Activated CD8-positive, alpha-beta memory T cell treated with anti-CD3 and anti-CD28 coated beads, Interleukin-2, amount 10 ng/mL, durations not matched to agents 7 days and 5 days (primary cell): ENCODE measurements at regions of chr1 and their contacts with region 1.

Region 1: GRCh38 chr1:147892731-147893214 is 9.8 kb upstream of the GJA8 start:
- DNase-seq: peak; percentile 45
- ATAC-seq: no peak
- H3K4me3 Mint-ChIP-seq: no peak overlapping the region
- H3K27ac Mint-ChIP-seq: no peak overlapping the region
- H3K4me1 Mint-ChIP-seq: no peaks in the 10 kb centered on the region
- H3K27me3 Mint-ChIP-seq: peaks cover 10% of the 10 kb centered on the region

Region 2: DNA sequence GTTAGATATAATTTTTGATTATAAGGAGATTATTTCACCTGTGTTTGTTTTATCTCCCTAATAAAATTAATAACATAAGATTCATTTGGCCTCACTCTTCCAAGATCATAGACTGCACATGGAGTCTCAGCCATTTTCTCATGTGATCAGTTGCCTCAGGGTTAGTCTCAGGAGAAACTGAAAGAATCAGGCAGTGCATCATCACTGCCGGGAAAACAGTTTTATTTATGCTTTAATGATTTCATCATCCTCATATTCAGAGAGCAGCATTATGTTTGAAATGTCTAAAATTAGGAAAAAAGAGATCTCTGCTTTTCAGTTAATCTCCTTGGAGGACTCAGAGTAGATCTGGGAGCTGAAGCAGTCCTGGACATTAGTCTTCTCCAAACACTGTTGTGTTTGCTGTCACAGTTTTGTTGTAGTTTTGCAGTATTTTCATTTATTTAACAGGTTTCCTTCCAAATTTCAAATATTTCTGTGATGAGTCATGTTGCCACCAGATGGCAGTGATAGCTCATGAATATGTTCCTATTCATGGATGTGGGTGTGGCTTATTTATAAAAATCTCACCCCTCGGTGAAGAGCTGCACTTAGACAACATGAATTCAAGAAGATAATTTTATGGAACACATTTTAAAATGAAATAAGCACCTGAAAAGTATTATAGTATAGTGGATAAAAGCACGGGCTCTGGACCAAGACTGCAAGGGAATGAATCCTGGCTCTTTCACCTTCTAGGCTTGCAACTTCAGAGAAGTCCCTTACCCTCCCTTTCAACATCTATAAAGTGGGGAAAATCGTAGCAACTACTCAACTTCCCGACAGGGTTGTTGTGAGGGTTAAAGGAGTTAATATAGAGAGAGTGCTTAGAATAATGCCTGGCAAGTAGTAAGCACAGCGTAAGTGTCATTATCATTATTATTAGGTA is 619.1 kb before region 1 on chr1:
- CTCF ChIA-PET with region 1: interaction called, 10 read pairs
- DNase-seq: no peak
- ATAC-seq: no peak
- H3K4me3 Mint-ChIP-seq: no peak overlapping the region
- H3K27ac Mint-ChIP-seq: no peak overlapping the region
- H3K4me1 Mint-ChIP-seq: no peaks in the 10 kb centered on the region
- H3K27me3 Mint-ChIP-seq: no peaks in the 10 kb centered on the region

Region 3: DNA sequence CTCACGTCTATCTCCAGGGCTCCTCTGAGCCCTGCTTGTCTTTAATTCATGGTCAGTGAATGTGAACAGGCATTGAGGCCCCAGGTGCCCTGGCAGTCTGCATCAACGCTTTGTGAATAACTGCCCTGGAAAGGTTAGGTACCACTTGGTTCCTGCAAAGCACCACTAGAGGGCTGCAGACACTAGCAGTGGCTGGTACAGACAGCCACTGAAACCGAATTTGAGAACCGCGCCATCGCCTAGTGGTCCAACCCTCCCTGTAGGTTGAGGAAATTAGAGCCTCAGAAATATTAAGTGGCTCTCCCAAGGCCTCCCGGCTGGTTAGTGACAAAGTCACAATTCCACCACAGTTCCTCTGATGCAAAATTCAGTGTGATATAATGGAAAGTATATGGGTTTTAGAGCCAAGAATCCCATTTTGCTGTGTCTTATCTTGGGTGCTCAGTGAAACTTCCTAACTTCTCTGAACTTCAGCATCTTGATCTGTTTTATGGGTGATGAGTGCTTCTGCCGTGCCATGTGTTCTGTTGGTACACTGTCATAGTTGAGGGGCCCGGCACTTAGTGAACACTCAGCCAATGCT is 397.7 kb before region 1 on chr1:
- CTCF ChIA-PET with region 1: interaction called, 24 read pairs
- DNase-seq: peak; percentile 81
- ATAC-seq: peak; percentile 100
- H3K4me3 Mint-ChIP-seq: no peak overlapping the region
- H3K27ac Mint-ChIP-seq: no peak overlapping the region
- H3K4me1 Mint-ChIP-seq: no peaks in the 10 kb centered on the region
- H3K27me3 Mint-ChIP-seq: peaks cover 10% of the 10 kb centered on the region

Region 4: GRCh38 chr1:147627435-147628110 is 265.2 kb before region 1 on chr1:
- CTCF ChIA-PET with region 1: interaction called, 12 read pairs
- DNase-seq: peak; percentile 55
- ATAC-seq: peak; percentile 72
- H3K4me3 Mint-ChIP-seq: no peak overlapping the region
- H3K27ac Mint-ChIP-seq: no peak overlapping the region
- H3K4me1 Mint-ChIP-seq: peaks cover 19% of the 10 kb centered on the region
- H3K27me3 Mint-ChIP-seq: no peaks in the 10 kb centered on the region

Region 5: DNA sequence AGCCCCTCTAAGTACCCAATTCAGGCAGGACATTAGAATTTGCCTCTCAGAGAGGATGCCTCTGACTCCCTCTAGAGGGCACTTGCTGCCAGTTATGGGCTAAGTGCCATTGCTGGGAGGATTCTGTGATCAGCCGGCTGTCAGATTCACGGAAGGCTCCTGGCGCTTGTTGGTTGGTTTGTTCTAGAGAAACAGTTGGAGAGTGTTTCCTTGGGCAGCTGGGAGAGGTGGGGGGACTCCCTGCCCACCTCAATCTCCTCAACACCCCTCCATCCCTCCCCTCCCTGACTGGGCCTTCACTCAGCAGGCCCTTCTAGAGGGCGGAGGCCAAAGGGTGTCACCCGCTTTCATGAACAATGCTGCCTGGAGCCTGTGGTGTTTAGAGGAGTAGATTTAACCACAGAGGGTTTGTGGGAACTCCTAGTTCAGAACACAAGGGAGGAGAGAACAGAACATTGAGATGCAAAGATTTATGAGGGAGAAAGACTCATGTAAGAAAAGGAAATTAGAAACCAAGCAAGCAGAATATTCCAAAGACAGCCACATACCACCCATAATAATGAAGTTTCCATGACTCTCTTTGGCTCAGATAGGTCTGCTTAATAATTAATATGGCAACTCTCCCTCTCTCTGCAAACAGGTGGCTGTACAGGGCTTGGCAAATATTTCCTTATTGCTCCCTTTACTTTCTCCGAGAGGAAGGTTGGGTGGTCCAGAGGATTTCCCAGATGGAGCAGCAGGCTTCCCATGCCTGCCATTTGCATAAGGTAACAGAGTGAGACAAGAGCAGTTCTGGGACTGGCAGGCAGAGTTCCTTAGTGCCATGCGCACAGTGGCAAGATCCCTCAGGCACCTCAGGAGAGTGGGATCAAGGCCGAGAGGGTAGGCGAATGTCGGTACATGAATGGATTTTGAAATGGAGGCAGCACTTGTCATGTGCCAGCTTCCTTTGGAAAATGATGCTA is 192.4 kb before region 1 on chr1:
- CTCF ChIA-PET with region 1: interaction called, 10 read pairs
- DNase-seq: peak; percentile 71
- ATAC-seq: peak; percentile 95
- H3K4me3 Mint-ChIP-seq: no peak overlapping the region
- H3K27ac Mint-ChIP-seq: no peak overlapping the region
- H3K4me1 Mint-ChIP-seq: peaks cover 6% of the 10 kb centered on the region
- H3K27me3 Mint-ChIP-seq: peaks cover 24% of the 10 kb centered on the region

Region 6: DNA sequence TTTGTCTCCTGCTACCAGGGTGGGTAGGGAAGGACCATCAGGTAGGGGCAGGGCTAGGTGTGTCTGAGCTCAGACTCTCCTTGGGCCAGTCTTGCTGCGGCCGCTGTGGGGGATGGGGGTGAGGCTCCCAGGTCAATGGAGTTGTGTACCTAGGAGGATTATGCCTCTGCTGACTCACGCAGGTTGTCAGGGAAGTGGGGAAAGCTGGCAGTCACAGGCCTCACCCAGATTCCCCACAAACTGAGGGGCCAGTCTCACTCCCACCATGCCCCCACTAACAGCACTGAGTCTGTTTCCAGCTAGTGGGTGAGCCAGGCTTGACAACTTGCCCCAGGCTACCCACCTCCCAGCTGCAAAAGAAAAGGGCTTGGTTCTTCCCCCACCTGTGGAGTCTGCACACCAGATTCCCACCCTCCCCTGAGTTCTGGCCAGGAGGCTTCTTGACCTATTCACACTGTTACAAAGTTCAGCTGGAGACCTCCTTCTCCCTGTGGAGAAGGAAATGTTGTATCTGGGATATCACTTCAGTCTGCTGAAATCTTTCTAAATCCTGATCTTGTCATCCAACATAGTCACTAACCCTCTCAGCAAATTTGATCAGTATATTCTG is 59.4 kb before region 1 on chr1:
- CTCF ChIA-PET with region 1: no interaction called
- DNase-seq: no peak
- ATAC-seq: no peak
- H3K4me3 Mint-ChIP-seq: no peak overlapping the region
- H3K27ac Mint-ChIP-seq: no peak overlapping the region
- H3K4me1 Mint-ChIP-seq: no peaks in the 10 kb centered on the region
- H3K27me3 Mint-ChIP-seq: peaks cover 22% of the 10 kb centered on the region

Region 7: GRCh38 chr1:147924813-147925212 is 32.0 kb after region 1 on chr1:
- CTCF ChIA-PET with region 1: no interaction called
- DNase-seq: no peak
- ATAC-seq: no peak
- H3K4me3 Mint-ChIP-seq: no peak overlapping the region
- H3K27ac Mint-ChIP-seq: no peak overlapping the region
- H3K4me1 Mint-ChIP-seq: peaks cover 5% of the 10 kb centered on the region
- H3K27me3 Mint-ChIP-seq: peaks cover 3% of the 10 kb centered on the region